K562 (cell line): ENCODE measurements at regions of chr2 and their contacts with region 1.

Region 1: DNA sequence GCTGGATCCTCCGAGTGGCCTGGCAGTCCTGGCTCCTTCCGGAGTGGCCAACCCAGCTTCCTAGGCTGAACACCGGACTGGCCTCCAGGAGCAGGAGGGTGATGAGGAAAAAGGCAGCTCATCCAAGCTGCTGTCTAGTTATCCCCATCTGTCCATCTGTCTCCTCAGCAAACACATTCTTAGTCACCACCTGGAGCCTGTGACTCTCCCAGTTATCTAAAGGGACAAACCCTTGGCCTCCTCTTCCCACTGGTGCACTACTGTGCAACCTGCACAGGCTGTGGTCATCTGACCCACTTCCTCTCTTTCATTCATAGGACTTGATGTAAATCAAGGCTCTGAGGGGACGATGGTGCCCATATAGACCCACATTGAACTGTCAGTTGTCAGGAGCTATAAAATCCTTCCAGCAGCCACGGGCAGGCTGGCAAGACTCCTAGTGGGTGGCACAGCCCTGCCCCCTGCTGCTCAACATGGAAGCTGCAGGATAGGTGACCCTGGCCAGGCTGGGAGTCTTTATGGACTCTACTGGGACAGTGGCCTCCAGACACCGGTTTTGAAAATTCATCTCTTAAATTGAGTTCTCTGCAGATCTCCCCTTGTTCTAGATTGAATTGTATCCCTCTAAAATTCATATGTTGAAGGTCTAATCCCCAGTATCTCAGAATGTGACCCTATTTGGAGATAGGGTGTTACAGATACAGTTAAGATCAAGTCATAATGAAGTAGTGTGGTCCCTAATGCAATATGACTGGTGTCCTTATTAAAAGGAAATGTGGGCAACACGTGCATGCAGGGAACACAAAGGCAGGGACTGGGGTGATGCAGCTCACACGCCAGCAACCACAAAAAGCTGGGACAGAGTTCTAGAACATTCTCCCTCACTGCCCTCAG is 29.3 kb upstream of the DUSP2 start:
- DNase-seq: peak; percentile 79 to 81 (median 80)
- ATAC-seq: peak; percentile 95
- H3K4me3 ChIP-seq: no peak overlapping the region
- H3K27ac ChIP-seq: no peak overlapping the region
- H3K4me1 ChIP-seq: peaks cover 4 to 6% of the 10 kb centered on the region in 2 experiments; a peak in 4 of 5 replicates
- H3K27me3 ChIP-seq: peaks cover 3 to 4% of the 10 kb centered on the region in 2 experiments; a peak in 3 of 5 replicates
- CTCF ChIP-seq: peak; percentile 91 to 96 (median 95)
- EP300 ChIP-seq: no peak
- POLR2A ChIP-seq: no peak
- RAD21 ChIP-seq: peak; percentile 89 to 91

Region 2: GRCh38 chr2:96218508-96219131 is 44.1 kb after region 1 on chr2:
- CTCF ChIA-PET with region 1: no interaction called
- POLR2A ChIA-PET with region 1: no interaction called
- in situ Hi-C with region 1: no loop called
- intact Hi-C with region 1: no loop called
- DNase-seq: no peak
- ATAC-seq: no peak
- H3K4me3 ChIP-seq: no peak overlapping the region
- H3K27ac ChIP-seq: no peak overlapping the region
- H3K4me1 ChIP-seq: no peaks in the 10 kb centered on the region; a peak in 1 of 5 replicates
- H3K27me3 ChIP-seq: no peaks in the 10 kb centered on the region
- CTCF ChIP-seq: no peak
- EP300 ChIP-seq: no peak
- POLR2A ChIP-seq: no peak
- RAD21 ChIP-seq: no peak

Region 3: GRCh38 chr2:96241900-96242611 is 67.6 kb after region 1 on chr2:
- CTCF ChIA-PET with region 1: no interaction called
- POLR2A ChIA-PET with region 1: no interaction called
- in situ Hi-C with region 1: no loop called
- intact Hi-C with region 1: no loop called
- DNase-seq: no peak
- ATAC-seq: no peak
- H3K4me3 ChIP-seq: no peak overlapping the region
- H3K27ac ChIP-seq: no peak overlapping the region
- H3K4me1 ChIP-seq: peaks cover 5 to 18% of the 10 kb centered on the region in 2 experiments; a peak in 4 of 5 replicates
- H3K27me3 ChIP-seq: no peaks in the 10 kb centered on the region
- CTCF ChIP-seq: no peak
- EP300 ChIP-seq: no peak
- POLR2A ChIP-seq: no peak
- RAD21 ChIP-seq: no peak

Region 4: DNA sequence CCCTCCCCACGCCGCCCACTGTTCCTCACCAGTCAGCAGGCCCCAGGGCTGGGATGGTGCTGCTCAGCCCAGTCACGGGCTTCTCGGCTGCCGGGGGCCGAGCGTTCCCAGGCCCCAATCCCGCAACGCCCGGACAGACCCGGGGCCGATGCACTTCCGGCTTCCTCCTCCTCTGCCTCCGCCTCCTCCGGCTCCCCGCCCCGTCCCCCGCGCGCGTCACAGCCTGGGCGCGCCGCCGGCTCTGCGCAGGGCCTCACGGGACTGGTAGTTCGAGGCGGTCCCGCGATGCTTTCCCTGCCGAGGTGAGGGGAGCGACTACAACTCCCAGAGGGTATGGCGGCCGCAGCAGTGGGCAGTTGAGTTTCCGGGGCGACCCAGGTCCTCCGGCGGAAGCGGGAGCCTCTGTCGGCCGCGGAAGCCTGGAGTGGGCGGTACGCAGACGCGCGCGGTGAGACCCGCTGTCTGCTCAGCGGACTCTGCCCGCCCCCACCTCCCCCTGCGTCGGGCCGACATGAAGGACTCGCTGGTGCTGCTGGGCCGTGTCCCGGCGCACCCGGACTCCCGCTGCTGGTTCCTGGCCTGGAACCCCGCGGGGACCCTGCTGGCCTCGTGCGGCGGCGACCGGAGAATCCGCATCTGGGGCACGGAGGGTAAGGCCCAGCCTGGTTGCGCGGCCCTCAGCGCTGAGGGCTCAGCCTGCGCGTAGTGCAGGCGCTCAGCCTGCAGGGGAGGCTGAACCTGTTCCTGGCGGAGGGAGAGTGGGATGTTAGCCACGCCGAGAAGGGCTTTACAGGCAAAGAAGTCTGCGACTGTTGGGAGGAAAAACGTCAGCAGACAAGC is 91.6 kb after region 1 on chr2 and contains the starts of genes CIAO1 and TMEM127:
- CTCF ChIA-PET with region 1: no interaction called
- POLR2A ChIA-PET with region 1: no interaction called
- in situ Hi-C with region 1: no loop called
- intact Hi-C with region 1: loop called (anchors 2 kb)
- DNase-seq: peak; percentile 93 to 98 (median 95)
- ATAC-seq: peak; percentile 98
- H3K4me3 ChIP-seq: peak within 1 kb of the TSS; percentile 84
- H3K27ac ChIP-seq: peak within 1 kb of the TSS; percentile 78
- H3K4me1 ChIP-seq: peaks cover 21 to 27% of the 10 kb centered on the region in 2 experiments
- H3K27me3 ChIP-seq: no peaks in the 10 kb centered on the region
- CTCF ChIP-seq: peak; percentile 19 to 37 (median 19); a peak in 4 of 6 replicates
- EP300 ChIP-seq: no peak
- POLR2A ChIP-seq: peak; percentile 85
- RAD21 ChIP-seq: no peak; a peak in 1 of 4 replicates
- polyA plus RNA-seq, gene CIAO1: 11.4 to 19.2 TPM
- polyA plus RNA-seq, gene TMEM127: 1.7 to 2.0 TPM